ENCODE measurements at regions of chrX and their contacts with region 1.

Region 1: GRCh38 chrX:20066968-20067708 is 49.6 kb downstream of the MAP7D2 start:
- DNase-seq: peak; percentile 57
- H3K4me3 ChIP-seq: no peak overlapping the region
- H3K27ac ChIP-seq: peak overlapping the region in 1 of 2 experiments; percentile 36; a peak in 1 of 4 replicates
- H3K4me1 ChIP-seq: peaks cover 9 to 11% of the 10 kb centered on the region in 2 experiments; a peak in 3 of 4 replicates
- H3K27me3 ChIP-seq: peaks cover 14% of the 10 kb centered on the region; the same call in 1 of the 2 replicates
- CTCF ChIP-seq: peak; percentile 73
- EP300 ChIP-seq: no peak
- RAD21 ChIP-seq: peak; percentile 87

Region 2: GRCh38 chrX:19904778-19905367 is 162.3 kb before region 1 on chrX:
- CTCF ChIA-PET with region 1: interaction called, 29 read pairs
- POLR2A ChIA-PET with region 1: no interaction called
- DNase-seq: peak; percentile 59
- H3K4me3 ChIP-seq: no peak overlapping the region
- H3K27ac ChIP-seq: no peak overlapping the region
- H3K4me1 ChIP-seq: no peaks in the 10 kb centered on the region
- H3K27me3 ChIP-seq: peaks cover 8% of the 10 kb centered on the region; the same call in 1 of the 2 replicates
- CTCF ChIP-seq: peak; percentile 77
- EP300 ChIP-seq: no peak
- RAD21 ChIP-seq: peak; percentile 84

Region 3: DNA sequence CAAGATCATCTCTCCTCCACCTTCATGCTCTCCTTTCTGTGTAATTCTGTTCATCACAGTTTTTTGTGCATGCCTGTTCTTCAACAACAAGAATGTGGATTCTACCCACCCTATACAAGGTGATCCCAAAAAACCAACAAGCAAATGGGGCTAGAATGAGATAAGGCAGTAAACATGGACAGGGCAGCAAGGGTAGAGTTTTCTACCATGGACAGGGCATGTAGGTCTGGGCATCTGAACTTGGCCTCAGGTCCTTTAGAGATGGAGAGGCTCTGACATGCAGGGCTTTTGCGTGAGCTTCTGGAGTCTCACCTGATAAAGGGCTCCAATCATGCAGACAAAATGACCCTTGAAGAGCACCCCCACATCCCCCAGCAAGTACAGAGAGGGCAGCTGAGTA is 13.1 kb after region 1 on chrX:
- CTCF ChIA-PET with region 1: interaction called, 27 read pairs
- POLR2A ChIA-PET with region 1: no interaction called
- DNase-seq: no peak
- H3K4me3 ChIP-seq: no peak overlapping the region
- H3K27ac ChIP-seq: no peak overlapping the region
- H3K4me1 ChIP-seq: no peaks in the 10 kb centered on the region
- H3K27me3 ChIP-seq: no peaks in the 10 kb centered on the region; the same call in none of the 2 replicates
- CTCF ChIP-seq: no peak
- EP300 ChIP-seq: no peak
- RAD21 ChIP-seq: no peak

Measured in SK-N-SH (cell line).